ENCODE measurements at regions of chr4 and their contacts with region 1.

Region 1: DNA sequence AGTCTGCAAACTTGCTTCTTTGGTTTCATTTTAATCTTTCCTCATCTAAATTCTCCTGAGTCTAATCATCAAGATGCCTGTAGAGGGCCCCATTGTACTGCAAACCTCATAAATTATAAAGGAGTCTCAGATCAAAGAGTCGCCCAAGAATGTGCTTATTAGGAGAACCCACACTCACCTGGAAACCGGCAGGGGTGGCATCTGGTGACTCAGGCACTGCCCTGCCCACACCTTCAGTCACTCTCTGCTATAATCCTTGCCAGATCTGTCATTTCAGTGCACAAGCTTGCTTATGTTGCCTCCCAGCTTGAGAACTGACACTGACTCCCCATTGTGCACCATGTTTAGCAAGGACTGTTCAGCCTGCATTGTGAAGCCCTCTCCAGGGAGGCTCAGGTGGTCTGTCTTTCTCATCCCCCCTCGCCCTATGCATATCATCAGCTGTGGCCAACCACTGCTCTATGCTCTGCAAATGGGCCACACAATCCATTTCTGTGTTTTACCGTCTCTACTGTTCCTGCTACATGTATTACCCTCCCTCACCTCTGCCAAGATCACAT is 12.4 kb downstream of the EPGN start:
- DNase-seq: peak; percentile 98
- ATAC-seq: peak; percentile 95
- H3K4me3 ChIP-seq: peak overlapping the region; percentile 10 to 41; a peak in 3 of 4 replicates
- H3K27ac ChIP-seq: peak overlapping the region; percentile 58
- H3K4me1 ChIP-seq: peaks cover 29 to 61% of the 10 kb centered on the region in 2 experiments
- H3K27me3 ChIP-seq: no peaks in the 10 kb centered on the region
- CTCF ChIP-seq: peak; percentile 59 to 86 (median 71)
- POLR2A ChIP-seq: no peak
- RAD21 ChIP-seq: peak; percentile 96

Region 2: GRCh38 chr4:74189331-74190043 is 131.2 kb before region 1 on chr4:
- CTCF ChIA-PET with region 1: interaction called, 10 read pairs
- POLR2A ChIA-PET with region 1: no interaction called
- RAD21 ChIA-PET with region 1: interaction called in 1 of 2 experiments, 4 read pairs
- intact Hi-C with region 1: no loop called
- DNase-seq: peak; percentile 72
- ATAC-seq: peak; percentile 73
- H3K4me3 ChIP-seq: no peak overlapping the region
- H3K27ac ChIP-seq: no peak overlapping the region
- H3K4me1 ChIP-seq: peaks cover 0 to 7% of the 10 kb centered on the region in 2 experiments; a peak in 1 of 4 replicates
- H3K27me3 ChIP-seq: no peaks in the 10 kb centered on the region
- CTCF ChIP-seq: peak; percentile 64 to 81 (median 76)
- POLR2A ChIP-seq: no peak
- RAD21 ChIP-seq: peak; percentile 87

Region 3: GRCh38 chr4:74370912-74371311 is 50.3 kb after region 1 on chr4:
- CTCF ChIA-PET with region 1: interaction called, 3 read pairs
- POLR2A ChIA-PET with region 1: interaction called, 17 read pairs
- RAD21 ChIA-PET with region 1: interaction called, 3 to 4 read pairs
- intact Hi-C with region 1: no loop called
- DNase-seq: peak; percentile 70
- ATAC-seq: peak; percentile 63
- H3K4me3 ChIP-seq: peak overlapping the region in 1 of 2 experiments; percentile 8; a peak in 1 of 4 replicates
- H3K27ac ChIP-seq: peak overlapping the region; percentile 94
- H3K4me1 ChIP-seq: peaks cover 83 to 98% of the 10 kb centered on the region in 2 experiments
- H3K27me3 ChIP-seq: no peaks in the 10 kb centered on the region
- CTCF ChIP-seq: peak in 2 of 3 experiments; percentile 73 to 87; a peak in 4 of 6 replicates
- POLR2A ChIP-seq: no peak
- RAD21 ChIP-seq: no peak

Region 4: DNA sequence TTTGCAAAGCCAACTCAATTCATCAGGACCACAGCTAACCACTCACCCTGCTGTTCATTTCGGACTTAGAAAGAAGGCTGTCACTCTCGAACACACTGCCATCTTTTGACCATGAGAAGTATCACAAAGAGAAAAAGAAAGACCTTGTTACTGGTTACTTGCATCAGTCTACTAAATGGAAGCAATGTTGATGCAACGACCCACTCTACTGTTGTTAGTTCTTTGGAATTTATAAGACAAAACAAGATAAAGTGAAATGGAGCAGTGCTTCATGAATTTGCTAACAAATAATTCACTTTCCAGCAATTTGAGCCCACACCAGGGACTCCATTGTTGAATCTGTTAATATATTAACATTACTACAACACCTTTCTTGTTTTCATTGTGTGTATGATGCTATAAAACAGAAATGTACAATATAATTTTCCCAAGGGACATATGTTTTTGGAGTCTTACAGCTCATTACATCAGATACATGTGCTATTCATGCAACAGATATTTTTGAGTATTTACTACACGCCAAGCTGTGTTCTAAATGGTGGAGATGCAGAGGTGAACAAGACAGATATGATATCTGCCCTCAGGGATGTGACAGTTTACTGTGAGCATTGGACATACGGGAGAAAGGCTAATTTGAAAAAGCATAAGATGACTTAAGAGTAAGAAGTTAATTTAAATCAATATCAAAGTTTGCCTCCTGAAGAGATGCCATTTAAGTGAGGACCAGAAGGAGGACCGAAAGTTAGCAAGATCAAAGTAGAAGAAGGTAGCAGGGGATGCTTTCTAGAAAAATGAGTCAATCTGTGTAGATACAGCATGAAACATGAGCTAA is 211.5 kb after region 1 on chr4:
- CTCF ChIA-PET with region 1: interaction called, 7 read pairs
- POLR2A ChIA-PET with region 1: interaction called, 6 read pairs
- RAD21 ChIA-PET with region 1: interaction called in 1 of 2 experiments, 4 read pairs
- intact Hi-C with region 1: loop called (anchors 2 kb)
- DNase-seq: peak; percentile 92
- ATAC-seq: peak; percentile 86
- H3K4me3 ChIP-seq: no peak overlapping the region
- H3K27ac ChIP-seq: peak overlapping the region; percentile 37; the same call in 1 of the 2 replicates
- H3K4me1 ChIP-seq: peaks cover 54 to 79% of the 10 kb centered on the region in 2 experiments
- H3K27me3 ChIP-seq: no peaks in the 10 kb centered on the region
- CTCF ChIP-seq: peak; percentile 59 to 98 (median 69)
- POLR2A ChIP-seq: no peak
- RAD21 ChIP-seq: peak; percentile 95

Region 5: DNA sequence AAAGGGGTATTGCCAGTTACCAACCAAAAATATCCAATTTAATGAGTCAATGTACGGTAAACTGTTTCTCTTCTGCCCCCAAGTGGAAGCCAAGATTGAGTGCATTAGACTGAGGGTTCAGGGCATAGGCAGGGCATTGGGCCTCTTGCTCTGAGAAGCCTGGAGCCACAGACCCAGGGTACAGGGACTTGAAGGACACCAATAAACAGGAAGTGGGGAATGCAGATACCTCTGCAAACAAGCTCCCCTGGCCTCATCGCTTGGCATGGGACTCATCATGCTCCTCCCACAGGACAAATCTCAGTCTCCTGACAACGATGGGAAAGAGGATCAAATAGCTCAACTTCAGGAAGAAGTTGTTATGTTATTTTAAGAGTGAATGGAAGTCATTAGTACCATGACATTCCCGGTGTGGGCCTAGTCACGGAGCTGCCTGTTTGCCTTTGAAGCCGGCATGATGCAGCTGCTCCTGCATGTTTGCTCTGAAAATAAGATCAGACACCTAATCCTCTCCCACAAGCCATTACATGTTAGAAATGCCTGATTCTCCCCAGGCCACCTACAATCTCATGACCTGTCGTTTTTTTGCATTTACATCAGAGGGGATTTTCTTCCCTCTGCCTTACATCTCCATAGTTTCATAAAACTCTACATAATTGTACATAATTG is 969.4 kb after region 1 on chr4:
- CTCF ChIA-PET with region 1: no interaction called
- POLR2A ChIA-PET with region 1: no interaction called
- RAD21 ChIA-PET with region 1: no interaction called
- intact Hi-C with region 1: loop called (anchors 10 kb)
- DNase-seq: peak; percentile 47
- ATAC-seq: peak; percentile 99
- H3K4me3 ChIP-seq: no peak overlapping the region
- H3K27ac ChIP-seq: no peak overlapping the region
- H3K4me1 ChIP-seq: no peaks in the 10 kb centered on the region
- H3K27me3 ChIP-seq: no peaks in the 10 kb centered on the region
- CTCF ChIP-seq: peak; percentile 52 to 71 (median 68)
- POLR2A ChIP-seq: no peak
- RAD21 ChIP-seq: peak; percentile 84